ENCODE measurements at regions of chr2 and their contacts with region 1.

Region 1: DNA sequence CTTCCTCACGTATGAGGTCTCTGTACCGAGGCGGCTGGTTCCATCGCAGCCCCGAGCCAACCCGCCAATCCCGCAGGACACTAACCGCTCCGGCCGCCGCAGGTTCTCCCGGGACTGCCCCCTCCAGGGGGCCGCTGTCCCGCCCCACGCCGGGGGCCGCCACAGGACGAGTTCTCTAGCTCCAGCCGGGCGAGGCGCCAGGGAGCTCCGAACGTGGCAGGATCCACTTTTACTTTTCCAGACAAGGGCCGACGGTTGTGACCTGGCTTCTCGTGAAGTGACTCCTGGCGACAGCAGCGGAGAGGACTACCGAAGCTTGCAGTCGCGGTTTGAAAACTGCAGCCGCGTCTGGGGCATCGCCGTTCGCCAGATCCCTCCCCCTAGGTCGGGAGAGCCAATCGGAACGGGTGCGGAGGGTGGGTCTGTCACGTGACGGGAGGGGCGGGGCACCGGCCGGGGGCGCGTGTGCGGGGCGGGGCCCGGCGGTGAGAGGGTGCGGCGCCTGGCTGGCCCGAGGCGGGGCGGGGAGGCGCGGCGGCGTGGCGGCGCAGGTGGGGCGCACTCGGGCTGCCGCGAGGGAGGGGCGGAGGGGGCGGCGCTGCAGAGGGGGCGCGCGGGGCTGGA is at the start of gene STK17B:
- DNase-seq: peak; percentile 93 to 97 (median 95)
- H3K4me3 ChIP-seq: peak within 1 kb of the TSS; percentile 87 to 88
- H3K4me3 Mint-ChIP-seq: peak within 1 kb of the TSS; percentile 91 to 99 (median 96)
- H3K27ac ChIP-seq: peak within 1 kb of the TSS; percentile 92
- H3K27ac Mint-ChIP-seq: peak within 1 kb of the TSS; percentile 94 to 98 (median 96)
- H3K4me1 ChIP-seq: peaks cover 45% of the 10 kb centered on the region
- H3K4me1 Mint-ChIP-seq: peaks cover 31 to 52% (median 39%) of the 10 kb centered on the region in 4 donors
- H3K27me3 ChIP-seq: no peaks in the 10 kb centered on the region
- H3K27me3 Mint-ChIP-seq: no peaks in the 10 kb centered on the region
- total RNA-seq, gene STK17B: 234 to 243 TPM

Region 2: DNA sequence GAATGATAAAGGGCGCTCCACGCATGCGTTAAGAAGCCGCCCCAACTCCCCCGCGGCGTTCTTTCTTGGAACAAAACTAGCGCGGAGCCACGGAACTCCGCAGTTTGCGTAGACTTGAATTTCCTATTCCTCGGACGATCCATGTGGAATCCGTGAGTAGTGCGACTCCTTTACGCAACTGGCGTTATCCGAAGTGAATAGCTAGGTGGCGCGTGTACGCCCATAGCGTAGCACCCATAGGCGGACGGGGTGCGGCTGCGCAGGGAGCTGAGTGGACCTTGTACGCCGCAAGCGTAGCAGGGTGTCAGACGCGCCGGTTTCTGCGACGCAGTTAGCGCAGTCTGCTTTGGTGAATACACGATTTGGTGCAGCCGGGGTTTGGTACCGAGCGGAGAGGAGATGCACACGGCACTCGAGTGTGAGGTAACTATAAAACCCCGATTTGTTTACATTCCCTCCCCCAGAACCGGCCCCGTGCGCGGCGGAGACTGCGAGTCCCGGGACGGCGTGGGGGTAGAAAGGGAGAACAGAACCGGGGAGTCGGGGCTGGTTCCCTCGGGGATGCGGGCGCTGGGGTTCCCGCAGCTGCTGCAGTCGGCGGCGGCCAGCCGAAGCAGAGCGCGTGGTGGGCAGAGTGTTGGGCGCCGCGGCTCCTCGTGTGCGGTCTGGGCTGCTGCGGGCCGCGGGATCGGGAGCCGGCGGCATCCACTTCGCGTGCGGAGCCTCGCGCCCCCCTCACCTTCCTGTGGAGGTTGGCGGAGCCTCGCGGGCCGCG is 514.3 kb before region 1 on chr2 and contains the start of gene SLC39A10:
- CTCF ChIA-PET with region 1: no interaction called
- POLR2A ChIA-PET with region 1: interaction called, 8 read pairs
- intact Hi-C with region 1: loop called (anchors 5 kb)
- DNase-seq: peak; percentile 96 to 99 (median 97)
- H3K4me3 ChIP-seq: peak within 1 kb of the TSS; percentile 66 to 80
- H3K4me3 Mint-ChIP-seq: peak within 1 kb of the TSS; percentile 96 to 99 (median 99)
- H3K27ac ChIP-seq: peak within 1 kb of the TSS; percentile 99
- H3K27ac Mint-ChIP-seq: peak within 1 kb of the TSS; percentile 97 to 100 (median 99)
- H3K4me1 ChIP-seq: peaks cover 35% of the 10 kb centered on the region
- H3K4me1 Mint-ChIP-seq: peaks cover 18 to 48% (median 22%) of the 10 kb centered on the region in 4 donors
- H3K27me3 ChIP-seq: no peaks in the 10 kb centered on the region
- H3K27me3 Mint-ChIP-seq: peaks cover 0 to 2% of the 10 kb centered on the region in 2 donors
- total RNA-seq, gene SLC39A10: 101 to 102 TPM

Region 3: DNA sequence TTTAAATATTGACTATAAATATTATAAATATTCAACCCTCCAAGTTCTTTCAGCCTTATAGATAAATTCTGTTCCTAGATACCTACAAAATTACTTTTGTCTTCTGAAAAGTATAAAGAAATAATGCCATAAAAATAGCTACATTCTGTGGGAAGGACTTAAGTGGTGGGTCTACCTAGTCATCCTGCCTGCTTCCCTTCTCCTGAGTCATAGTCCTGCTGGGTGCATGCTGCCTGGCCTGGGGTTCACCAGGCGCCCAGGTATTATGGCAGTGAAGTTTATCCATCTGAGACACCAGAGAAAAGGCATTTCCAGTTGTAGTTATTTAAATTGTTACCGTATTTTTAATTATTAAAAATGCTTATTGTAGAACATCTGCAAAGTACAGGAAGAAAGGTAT is 346.9 kb before region 1 on chr2:
- CTCF ChIA-PET with region 1: no interaction called
- POLR2A ChIA-PET with region 1: no interaction called
- intact Hi-C with region 1: no loop called
- DNase-seq: no peak
- H3K4me3 ChIP-seq: no peak overlapping the region
- H3K4me3 Mint-ChIP-seq: no peak overlapping the region
- H3K27ac ChIP-seq: no peak overlapping the region
- H3K27ac Mint-ChIP-seq: no peak overlapping the region
- H3K4me1 ChIP-seq: no peaks in the 10 kb centered on the region
- H3K4me1 Mint-ChIP-seq: no peaks in the 10 kb centered on the region
- H3K27me3 ChIP-seq: peaks cover 3% of the 10 kb centered on the region
- H3K27me3 Mint-ChIP-seq: peaks cover 0 to 1% of the 10 kb centered on the region in 2 donors

Region 4: GRCh38 chr2:196131384-196131937 is 39.9 kb before region 1 on chr2:
- CTCF ChIA-PET with region 1: interaction called, 4 read pairs
- POLR2A ChIA-PET with region 1: interaction called, 22 read pairs
- intact Hi-C with region 1: loop called (anchors 1 kb)
- DNase-seq: peak; percentile 50 to 64 (median 60)
- H3K4me3 ChIP-seq: no peak overlapping the region
- H3K4me3 Mint-ChIP-seq: peak overlapping the region in 6 of 8 donors; percentile 6 to 62 (median 34)
- H3K27ac ChIP-seq: peak overlapping the region; percentile 33
- H3K27ac Mint-ChIP-seq: peak overlapping the region in 6 of 7 donors; percentile 66 to 94 (median 89)
- H3K4me1 ChIP-seq: peaks cover 12% of the 10 kb centered on the region
- H3K4me1 Mint-ChIP-seq: peaks cover 3 to 18% (median 10%) of the 10 kb centered on the region in 4 donors
- H3K27me3 ChIP-seq: no peaks in the 10 kb centered on the region
- H3K27me3 Mint-ChIP-seq: no peaks in the 10 kb centered on the region

Region 5: DNA sequence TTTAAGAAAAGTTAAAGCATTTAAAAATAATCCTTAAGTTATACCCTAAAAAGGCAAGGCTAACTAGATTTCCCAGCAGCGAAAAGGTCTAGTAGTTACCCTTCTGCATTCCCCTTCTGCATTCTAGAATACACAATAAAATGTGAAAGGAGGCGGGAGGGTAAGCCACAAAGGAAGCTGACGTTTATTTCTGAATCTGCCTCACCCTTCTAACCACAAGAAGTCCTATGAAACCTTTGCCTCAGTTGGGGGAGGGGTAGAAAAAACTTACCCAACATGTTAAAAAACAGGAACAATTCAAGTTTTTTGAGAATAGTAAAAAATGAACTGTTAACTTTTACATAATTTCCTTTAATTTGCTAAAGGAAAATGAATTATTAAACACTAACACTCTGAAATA is 11.3 kb before region 1 on chr2:
- CTCF ChIA-PET with region 1: interaction called, 8 read pairs
- POLR2A ChIA-PET with region 1: interaction called, 194 read pairs
- intact Hi-C with region 1: loop called (anchors 1 kb)
- DNase-seq: peak; percentile 86 to 90 (median 87)
- H3K4me3 ChIP-seq: peak overlapping the region in 1 of 2 donors; percentile 1
- H3K4me3 Mint-ChIP-seq: peak overlapping the region; percentile 62 to 90 (median 78)
- H3K27ac ChIP-seq: peak overlapping the region; percentile 95
- H3K27ac Mint-ChIP-seq: peak overlapping the region; percentile 92 to 98 (median 96)
- H3K4me1 ChIP-seq: peaks cover 96% of the 10 kb centered on the region
- H3K4me1 Mint-ChIP-seq: peaks cover 38 to 93% (median 59%) of the 10 kb centered on the region in 4 donors
- H3K27me3 ChIP-seq: no peaks in the 10 kb centered on the region
- H3K27me3 Mint-ChIP-seq: no peaks in the 10 kb centered on the region

Region 6: DNA sequence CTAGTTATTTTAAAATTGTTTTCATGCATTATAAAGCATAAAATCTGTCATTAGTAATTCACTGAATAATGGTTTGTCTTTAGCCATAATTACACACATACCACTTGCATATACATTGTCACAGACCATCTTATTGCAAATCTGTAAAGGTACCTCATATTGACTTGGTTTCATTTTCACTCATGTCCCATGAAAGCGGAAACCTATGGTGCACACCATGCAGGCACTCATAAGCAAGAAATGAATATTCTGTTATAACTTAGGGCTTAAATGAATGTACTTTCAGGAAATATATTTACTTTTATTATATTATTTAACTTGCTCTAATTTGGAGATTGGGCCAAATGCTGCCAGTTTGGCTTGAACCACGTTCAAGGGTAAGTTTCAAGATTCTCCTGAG is 29.2 kb after region 1 on chr2:
- CTCF ChIA-PET with region 1: interaction called, 26 read pairs
- POLR2A ChIA-PET with region 1: interaction called, 94 read pairs
- intact Hi-C with region 1: loop called (anchors 1 kb)
- DNase-seq: peak; percentile 45 to 55 (median 50)
- H3K4me3 ChIP-seq: peak overlapping the region; percentile 43 to 57
- H3K4me3 Mint-ChIP-seq: peak overlapping the region; percentile 74 to 92 (median 80)
- H3K27ac ChIP-seq: peak overlapping the region; percentile 70
- H3K27ac Mint-ChIP-seq: peak overlapping the region; percentile 72 to 98 (median 95)
- H3K4me1 ChIP-seq: peaks cover 63% of the 10 kb centered on the region
- H3K4me1 Mint-ChIP-seq: peaks cover 37 to 58% (median 44%) of the 10 kb centered on the region in 4 donors
- H3K27me3 ChIP-seq: no peaks in the 10 kb centered on the region
- H3K27me3 Mint-ChIP-seq: no peaks in the 10 kb centered on the region

Region 7: GRCh38 chr2:196233021-196233804 is 61.9 kb after region 1 on chr2:
- CTCF ChIA-PET with region 1: interaction called, 16 read pairs
- POLR2A ChIA-PET with region 1: interaction called, 113 read pairs
- intact Hi-C with region 1: no loop called
- DNase-seq: no peak
- H3K4me3 ChIP-seq: no peak overlapping the region
- H3K4me3 Mint-ChIP-seq: peak overlapping the region in 6 of 8 donors; percentile 21 to 41 (median 32)
- H3K27ac ChIP-seq: peak overlapping the region; percentile 33
- H3K27ac Mint-ChIP-seq: peak overlapping the region; percentile 83 to 99 (median 93)
- H3K4me1 ChIP-seq: peaks cover 96% of the 10 kb centered on the region
- H3K4me1 Mint-ChIP-seq: peaks cover 65 to 97% (median 79%) of the 10 kb centered on the region in 4 donors
- H3K27me3 ChIP-seq: no peaks in the 10 kb centered on the region
- H3K27me3 Mint-ChIP-seq: no peaks in the 10 kb centered on the region

Region 8: DNA sequence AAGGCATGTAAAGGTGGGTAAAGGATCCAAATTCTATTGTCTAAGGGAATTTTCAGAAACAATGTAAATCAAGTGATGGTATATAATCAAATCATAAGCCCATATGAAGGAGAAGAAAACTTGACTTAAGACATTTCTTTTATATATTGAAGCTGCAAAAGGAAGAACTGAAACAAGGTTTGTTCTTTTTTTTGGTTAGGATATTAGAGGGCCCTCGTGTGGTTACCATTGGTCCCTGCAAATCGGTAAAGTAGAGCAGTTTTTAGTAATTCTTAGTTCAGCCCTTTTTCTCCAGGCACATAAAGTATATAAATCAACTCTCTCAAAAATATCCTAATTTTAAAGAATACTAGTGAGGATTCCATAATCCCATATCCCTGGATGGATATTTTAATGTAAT is 105.6 kb after region 1 on chr2:
- CTCF ChIA-PET with region 1: interaction called, 93 read pairs
- POLR2A ChIA-PET with region 1: interaction called, 83 read pairs
- intact Hi-C with region 1: loop called (anchors 1 kb)
- DNase-seq: peak; percentile 46 to 70 (median 64)
- H3K4me3 ChIP-seq: no peak overlapping the region
- H3K4me3 Mint-ChIP-seq: peak overlapping the region in 5 of 8 donors; percentile 0 to 75 (median 40)
- H3K27ac ChIP-seq: peak overlapping the region; percentile 34
- H3K27ac Mint-ChIP-seq: peak overlapping the region; percentile 21 to 95 (median 81)
- H3K4me1 ChIP-seq: peaks cover 38% of the 10 kb centered on the region
- H3K4me1 Mint-ChIP-seq: peaks cover 30 to 60% (median 36%) of the 10 kb centered on the region in 4 donors
- H3K27me3 ChIP-seq: no peaks in the 10 kb centered on the region
- H3K27me3 Mint-ChIP-seq: no peaks in the 10 kb centered on the region

Region 9: DNA sequence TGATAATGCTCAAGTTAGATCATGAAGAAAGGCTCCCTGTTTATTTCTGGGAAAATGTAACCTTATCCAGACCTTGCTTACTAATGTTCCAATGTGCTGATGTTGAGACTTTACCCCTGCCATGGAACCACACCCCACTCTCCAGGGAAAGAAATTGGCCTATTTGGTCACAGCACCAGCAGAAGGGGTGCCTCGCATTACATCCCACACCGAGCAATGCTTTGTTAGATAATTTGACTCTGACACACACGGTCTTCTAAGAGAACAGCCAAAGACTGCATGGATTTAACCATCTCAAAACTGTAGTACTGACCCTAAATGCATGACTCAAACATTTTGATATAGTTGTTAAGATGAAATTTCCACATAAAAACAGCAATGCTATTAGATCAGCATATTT is 316.1 kb after region 1 on chr2:
- CTCF ChIA-PET with region 1: no interaction called
- POLR2A ChIA-PET with region 1: no interaction called
- intact Hi-C with region 1: no loop called
- DNase-seq: no peak
- H3K4me3 ChIP-seq: no peak overlapping the region
- H3K4me3 Mint-ChIP-seq: no peak overlapping the region
- H3K27ac ChIP-seq: no peak overlapping the region
- H3K27ac Mint-ChIP-seq: no peak overlapping the region
- H3K4me1 ChIP-seq: no peaks in the 10 kb centered on the region
- H3K4me1 Mint-ChIP-seq: no peaks in the 10 kb centered on the region
- H3K27me3 ChIP-seq: no peaks in the 10 kb centered on the region
- H3K27me3 Mint-ChIP-seq: peaks cover 3 to 15% of the 10 kb centered on the region in 2 donors

Measured in CD4-positive, alpha-beta memory T cell (primary cell).